Activated CD4-positive, alpha-beta T cell treated with anti-CD3 and anti-CD28 coated beads for 36 hours (primary cell): ENCODE measurements at regions of chr9 and their contacts with region 1.

Region 1: GRCh38 chr9:113275157-113276131 is at the starts of genes CDC26 and PRPF4:
- DNase-seq: peak; percentile 98
- ATAC-seq: peak; percentile 91
- H3K4me3 Mint-ChIP-seq: no peak within 1 kb of the TSS
- H3K27ac Mint-ChIP-seq: no peak within 1 kb of the TSS
- H3K4me1 Mint-ChIP-seq: peaks cover 35% of the 10 kb centered on the region
- H3K27me3 Mint-ChIP-seq: no peaks in the 10 kb centered on the region
- total RNA-seq, gene CDC26: 27.5 to 44.2 TPM
- total RNA-seq, gene PRPF4: 51.5 to 53.1 TPM

Region 2: DNA sequence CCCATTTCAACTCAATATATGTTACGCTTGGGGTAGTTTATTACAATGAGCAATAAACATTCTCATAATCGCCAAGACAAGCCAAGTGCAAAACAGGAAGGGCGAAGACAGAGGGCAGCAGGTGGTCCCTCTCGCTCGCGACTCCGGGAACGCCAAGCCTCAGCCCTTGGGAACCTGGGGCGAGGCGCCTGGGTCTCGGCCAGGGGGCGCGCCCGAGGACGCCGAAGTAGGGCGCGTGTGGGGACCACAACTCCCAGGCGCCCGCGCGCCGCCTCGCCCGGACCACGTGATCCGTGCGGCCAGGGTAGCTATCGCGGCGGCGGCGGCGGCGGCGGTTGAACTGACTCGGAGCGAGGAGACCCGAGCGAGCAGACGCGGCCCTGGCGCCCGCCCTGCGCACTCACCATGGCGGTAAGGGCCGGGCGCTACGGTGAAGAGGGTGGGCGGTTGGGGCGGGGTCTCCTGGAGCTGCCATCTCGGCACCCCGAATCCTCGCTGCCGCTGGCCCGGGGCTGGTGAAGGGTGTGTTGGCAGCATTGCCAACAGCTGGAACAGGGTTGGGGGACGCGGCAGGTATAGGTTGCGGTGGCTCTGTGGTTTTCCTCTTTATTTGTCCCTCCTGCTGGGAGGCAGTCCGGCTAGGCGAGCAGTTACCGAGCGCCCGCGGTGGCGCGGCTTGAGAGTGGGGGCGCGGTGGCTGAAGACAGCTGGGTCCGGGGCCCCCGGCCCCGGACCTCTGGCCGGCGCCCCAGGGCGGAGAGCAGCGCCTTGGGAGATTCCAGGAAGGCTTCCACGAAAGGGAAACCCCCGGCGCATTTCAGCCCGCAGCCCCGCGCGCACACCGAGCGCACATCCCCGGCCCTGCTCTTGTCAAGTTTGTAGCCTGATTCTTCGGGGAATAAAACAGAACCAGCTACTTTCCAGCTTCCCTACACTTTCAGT is 124.5 kb before region 1 on chr9 and contains the start of gene SLC31A2:
- CTCF ChIA-PET with region 1: interaction called, 7 read pairs
- POLR2A ChIA-PET with region 1: interaction called, 3 read pairs
- intact Hi-C with region 1: loop called (anchors 1 to 2 kb)
- DNase-seq: peak; percentile 95
- ATAC-seq: peak; percentile 97
- H3K4me3 Mint-ChIP-seq: peak within 1 kb of the TSS; percentile 73
- H3K27ac Mint-ChIP-seq: peak within 1 kb of the TSS; percentile 51
- H3K4me1 Mint-ChIP-seq: peaks cover 29% of the 10 kb centered on the region
- H3K27me3 Mint-ChIP-seq: peaks cover 2% of the 10 kb centered on the region
- total RNA-seq, gene SLC31A2: 2.7 to 3.2 TPM

Region 3: GRCh38 chr9:113340017-113340699 is 64.7 kb after region 1 on chr9 and contains the start of gene WDR31:
- CTCF ChIA-PET with region 1: interaction called, 13 read pairs
- POLR2A ChIA-PET with region 1: interaction called, 4 read pairs
- intact Hi-C with region 1: loop called (anchors 1 kb)
- DNase-seq: peak; percentile 88
- ATAC-seq: peak; percentile 96
- H3K4me3 Mint-ChIP-seq: peak within 1 kb of the TSS; percentile 71
- H3K27ac Mint-ChIP-seq: peak within 1 kb of the TSS; percentile 43
- H3K4me1 Mint-ChIP-seq: peaks cover 27% of the 10 kb centered on the region
- H3K27me3 Mint-ChIP-seq: no peaks in the 10 kb centered on the region
- total RNA-seq, gene WDR31: 1.7 to 2.1 TPM

Region 4: DNA sequence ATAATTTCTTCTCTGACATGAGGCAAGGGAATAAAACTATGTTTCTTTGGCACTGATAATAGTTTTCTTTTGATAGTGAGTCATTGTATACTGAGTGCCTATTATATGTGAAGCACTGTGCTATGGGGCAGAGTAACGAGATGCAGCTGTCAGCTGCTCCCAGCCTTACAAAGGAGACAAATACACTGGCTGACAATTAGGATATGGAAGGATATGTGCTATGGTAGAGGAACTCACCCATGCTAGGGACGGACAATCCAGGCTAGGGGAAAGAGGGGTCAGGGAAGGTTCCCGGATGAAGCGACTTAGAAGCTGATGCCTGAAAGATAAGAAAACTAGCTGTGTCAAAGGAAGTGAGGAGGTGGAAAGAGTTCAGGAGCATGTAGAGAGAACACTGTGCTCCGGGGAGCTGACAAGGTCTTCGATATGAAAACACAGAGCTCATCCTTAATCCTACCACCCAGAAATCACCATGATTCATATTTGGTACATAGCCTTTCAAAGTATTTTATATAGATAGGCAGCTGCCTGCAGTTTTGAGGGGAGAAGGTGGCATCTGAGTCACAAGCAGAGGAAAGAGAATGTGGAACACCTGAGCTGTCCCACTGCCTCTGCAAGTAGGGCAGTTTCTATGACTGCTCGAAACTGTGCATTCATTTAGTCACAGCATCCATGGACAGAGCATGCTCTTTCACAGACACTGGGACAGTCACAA is 86.0 kb after region 1 on chr9:
- CTCF ChIA-PET with region 1: interaction called, 14 read pairs
- POLR2A ChIA-PET with region 1: no interaction called
- intact Hi-C with region 1: no loop called
- DNase-seq: peak; percentile 65
- ATAC-seq: peak; percentile 97
- H3K4me3 Mint-ChIP-seq: no peak overlapping the region
- H3K27ac Mint-ChIP-seq: no peak overlapping the region
- H3K4me1 Mint-ChIP-seq: peaks cover 14% of the 10 kb centered on the region
- H3K27me3 Mint-ChIP-seq: peaks cover 7% of the 10 kb centered on the region

Region 5: DNA sequence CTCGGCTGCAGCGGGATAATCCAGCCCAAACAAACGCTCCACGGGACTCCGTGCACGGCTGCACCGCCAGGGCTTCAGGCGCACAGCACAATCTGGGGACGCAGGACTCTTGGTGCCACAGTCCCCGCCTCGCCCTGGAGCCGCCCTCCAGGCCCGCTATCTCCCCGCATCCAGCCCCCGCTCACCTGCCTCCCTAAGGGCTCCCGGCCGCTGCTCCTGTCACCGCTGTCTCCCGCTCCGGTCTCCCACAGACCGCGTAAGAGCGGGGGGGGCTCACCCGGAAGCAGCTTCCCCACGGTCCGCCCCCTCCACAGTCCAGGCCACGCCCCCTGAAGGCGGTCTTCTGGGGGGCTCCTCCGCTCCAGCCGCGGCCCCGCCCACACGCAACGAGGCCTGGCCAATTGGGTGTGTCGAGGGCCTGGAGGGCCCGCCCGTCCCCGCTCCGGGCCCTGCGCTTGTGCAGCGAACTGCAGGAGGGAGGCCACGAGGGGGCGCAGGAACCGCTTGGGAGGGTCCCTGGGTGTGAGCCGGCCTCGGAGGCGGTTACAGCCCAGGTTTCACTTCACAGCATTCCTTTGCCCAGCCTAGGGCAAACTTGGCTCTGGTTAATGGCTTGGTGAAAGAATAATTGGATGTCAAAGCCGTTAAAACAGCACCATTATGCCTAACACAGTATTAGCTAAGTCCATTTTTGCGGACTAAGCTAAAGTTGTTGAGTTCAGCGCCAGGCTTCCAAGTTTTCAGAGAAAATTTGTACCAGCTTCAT is 125.8 kb after region 1 on chr9 and contains the start of gene ALAD:
- CTCF ChIA-PET with region 1: interaction called, 37 read pairs
- POLR2A ChIA-PET with region 1: interaction called, 3 read pairs
- intact Hi-C with region 1: loop called (anchors 1 kb)
- DNase-seq: peak; percentile 100
- ATAC-seq: peak; percentile 99
- H3K4me3 Mint-ChIP-seq: peak within 1 kb of the TSS; percentile 86
- H3K27ac Mint-ChIP-seq: peak within 1 kb of the TSS; percentile 84
- H3K4me1 Mint-ChIP-seq: peaks cover 19% of the 10 kb centered on the region
- H3K27me3 Mint-ChIP-seq: no peaks in the 10 kb centered on the region
- total RNA-seq, gene ALAD: 20.2 to 30.1 TPM

Region 6: DNA sequence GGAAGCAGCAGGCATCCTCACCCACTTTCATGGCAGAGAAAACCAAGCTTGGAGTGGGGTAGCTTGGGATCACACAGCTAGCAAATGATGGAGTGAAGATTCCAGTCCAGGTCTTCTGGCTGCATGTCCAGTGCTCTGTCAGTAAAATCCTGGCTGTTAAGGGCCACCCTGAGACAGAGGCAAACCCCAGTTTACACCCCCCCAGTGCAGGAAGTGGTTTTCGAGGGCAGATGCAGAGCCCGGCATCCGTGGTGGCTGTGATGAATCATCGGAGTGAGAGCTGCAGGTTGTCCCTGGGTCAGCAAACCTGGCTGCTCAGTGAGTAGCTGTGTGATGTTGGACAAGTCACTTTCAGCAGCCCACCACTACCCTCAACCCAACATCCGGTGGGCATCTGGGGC is 303.4 kb after region 1 on chr9:
- CTCF ChIA-PET with region 1: interaction called, 7 read pairs
- POLR2A ChIA-PET with region 1: no interaction called
- intact Hi-C with region 1: loop called (anchors 2 to 5 kb)
- DNase-seq: peak; percentile 94
- ATAC-seq: peak; percentile 66
- H3K4me3 Mint-ChIP-seq: peak overlapping the region; percentile 81
- H3K27ac Mint-ChIP-seq: peak overlapping the region; percentile 86
- H3K4me1 Mint-ChIP-seq: peaks cover 66% of the 10 kb centered on the region
- H3K27me3 Mint-ChIP-seq: no peaks in the 10 kb centered on the region

Region 7: DNA sequence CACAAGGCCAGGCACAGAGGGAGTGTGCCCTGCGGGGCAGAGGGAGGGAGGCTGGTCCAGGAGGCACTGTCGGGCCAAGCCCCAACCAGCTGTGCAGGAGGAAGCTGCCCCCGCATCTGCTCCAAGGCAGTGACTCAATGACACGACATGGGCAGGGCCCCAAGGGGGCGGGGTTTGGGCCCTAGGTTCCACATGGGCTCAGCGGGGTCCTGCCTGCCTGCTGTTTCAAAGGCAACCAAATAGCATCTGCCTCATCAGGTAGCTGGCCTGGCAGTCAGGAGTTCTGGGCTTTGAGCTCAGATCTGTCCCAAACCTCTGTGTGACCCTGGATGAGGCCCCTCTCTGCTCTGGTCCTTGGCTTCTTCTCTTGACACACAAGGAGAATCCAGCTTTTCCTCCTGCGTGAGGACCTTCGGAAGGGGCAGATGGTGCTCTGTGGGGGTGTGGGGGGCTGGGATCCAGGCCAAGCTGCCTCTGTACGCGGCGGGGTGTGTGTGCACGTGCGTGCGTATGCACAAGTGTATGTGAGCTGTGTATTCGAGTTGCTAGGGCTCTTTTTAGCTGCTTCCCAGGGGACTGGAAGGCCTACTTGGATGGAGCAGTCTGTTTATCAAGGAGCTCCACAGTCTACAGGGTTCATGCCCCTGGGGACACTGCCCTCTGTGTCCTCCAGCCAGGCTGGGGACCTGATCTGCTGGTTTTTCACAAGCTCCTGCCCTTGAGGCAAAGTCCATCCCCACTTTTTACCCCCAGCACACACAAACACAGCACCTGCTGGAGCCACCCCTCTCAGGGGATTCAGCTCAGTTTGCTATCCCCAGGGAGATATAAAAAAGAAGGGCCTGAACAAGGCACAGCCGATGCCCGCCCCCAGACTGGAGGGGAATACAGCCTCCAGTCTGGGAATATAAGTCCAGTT is 326.9 kb after region 1 on chr9:
- CTCF ChIA-PET with region 1: no interaction called
- POLR2A ChIA-PET with region 1: no interaction called
- intact Hi-C with region 1: no loop called
- DNase-seq: peak; percentile 92
- ATAC-seq: peak; percentile 100
- H3K4me3 Mint-ChIP-seq: no peak overlapping the region
- H3K27ac Mint-ChIP-seq: peak overlapping the region; percentile 78
- H3K4me1 Mint-ChIP-seq: peaks cover 15% of the 10 kb centered on the region
- H3K27me3 Mint-ChIP-seq: no peaks in the 10 kb centered on the region

Region 8: DNA sequence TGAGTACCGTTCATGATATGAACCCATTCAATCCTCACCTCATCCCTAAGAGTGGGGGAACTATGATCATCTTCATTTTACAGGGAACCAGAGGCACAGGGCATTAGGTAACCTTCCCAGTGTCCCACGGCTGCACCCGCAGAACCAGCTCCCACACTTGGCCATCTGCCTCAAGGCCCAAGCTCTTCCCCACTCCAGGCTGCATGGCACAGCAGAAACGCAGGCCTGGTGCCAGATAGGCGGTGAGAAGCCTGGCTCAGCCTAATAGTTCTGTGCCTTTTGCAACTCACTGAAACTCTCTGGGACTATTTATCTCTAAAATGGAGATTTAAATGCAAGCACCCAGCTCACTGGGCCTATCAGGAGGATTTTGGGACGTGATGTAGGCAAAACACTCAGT is 509.9 kb after region 1 on chr9:
- CTCF ChIA-PET with region 1: no interaction called
- POLR2A ChIA-PET with region 1: no interaction called
- intact Hi-C with region 1: no loop called
- DNase-seq: no peak
- ATAC-seq: no peak
- H3K4me3 Mint-ChIP-seq: no peak overlapping the region
- H3K27ac Mint-ChIP-seq: no peak overlapping the region
- H3K4me1 Mint-ChIP-seq: no peaks in the 10 kb centered on the region
- H3K27me3 Mint-ChIP-seq: peaks cover 3% of the 10 kb centered on the region

Region 9: GRCh38 chr9:114587385-114588202 is 1312.2 kb after region 1 on chr9 and contains the start of gene ATP6V1G1:
- CTCF ChIA-PET with region 1: no interaction called
- POLR2A ChIA-PET with region 1: no interaction called
- intact Hi-C with region 1: loop called in 1 of 2 experiments (anchors 10 kb)
- DNase-seq: peak; percentile 100
- ATAC-seq: peak; percentile 96
- H3K4me3 Mint-ChIP-seq: peak within 1 kb of the TSS; percentile 99
- H3K27ac Mint-ChIP-seq: peak within 1 kb of the TSS; percentile 100
- H3K4me1 Mint-ChIP-seq: peaks cover 44% of the 10 kb centered on the region
- H3K27me3 Mint-ChIP-seq: no peaks in the 10 kb centered on the region
- total RNA-seq, gene ATP6V1G1: 33.8 to 37.7 TPM